ENCODE measurements at regions of chr4 and their contacts with region 1.

Region 1: DNA sequence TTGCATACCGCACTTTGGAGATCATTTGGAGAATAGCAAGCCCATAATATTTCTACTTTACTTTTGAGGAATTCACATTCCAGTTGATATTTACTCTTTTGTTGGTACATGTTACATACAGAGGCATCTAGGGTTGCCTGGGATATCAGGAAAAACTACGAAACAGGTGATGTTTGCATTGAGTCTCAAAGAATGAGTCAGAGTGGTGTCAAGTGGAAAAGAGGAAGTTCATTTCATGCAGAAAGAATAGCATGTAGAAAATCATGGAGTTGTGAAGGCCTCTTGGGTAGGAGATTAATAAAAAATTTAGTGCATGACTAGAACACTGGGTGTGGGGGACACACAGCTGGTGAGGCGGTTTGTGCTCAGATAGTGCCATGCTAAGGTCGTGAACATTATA is 33.5 kb upstream of the ELOVL6 start:
- DNase-seq: no peak
- ATAC-seq: peak; percentile 61
- H3K4me3 ChIP-seq: no peak overlapping the region
- H3K27ac ChIP-seq: no peak overlapping the region
- H3K4me1 ChIP-seq: no peaks in the 10 kb centered on the region
- H3K27me3 ChIP-seq: no peaks in the 10 kb centered on the region
- CTCF ChIP-seq: no peak

Region 2: GRCh38 chr4:109908731-109909130 is 323.1 kb before region 1 on chr4:
- intact Hi-C with region 1: loop called in 1 of 2 experiments (anchors 10 kb)
- DNase-seq: peak in 2 of 4 donors; percentile 16 to 25
- ATAC-seq: no peak
- H3K4me3 ChIP-seq: no peak overlapping the region
- H3K27ac ChIP-seq: no peak overlapping the region
- H3K4me1 ChIP-seq: no peaks in the 10 kb centered on the region
- H3K27me3 ChIP-seq: no peaks in the 10 kb centered on the region
- CTCF ChIP-seq: no peak

Region 3: DNA sequence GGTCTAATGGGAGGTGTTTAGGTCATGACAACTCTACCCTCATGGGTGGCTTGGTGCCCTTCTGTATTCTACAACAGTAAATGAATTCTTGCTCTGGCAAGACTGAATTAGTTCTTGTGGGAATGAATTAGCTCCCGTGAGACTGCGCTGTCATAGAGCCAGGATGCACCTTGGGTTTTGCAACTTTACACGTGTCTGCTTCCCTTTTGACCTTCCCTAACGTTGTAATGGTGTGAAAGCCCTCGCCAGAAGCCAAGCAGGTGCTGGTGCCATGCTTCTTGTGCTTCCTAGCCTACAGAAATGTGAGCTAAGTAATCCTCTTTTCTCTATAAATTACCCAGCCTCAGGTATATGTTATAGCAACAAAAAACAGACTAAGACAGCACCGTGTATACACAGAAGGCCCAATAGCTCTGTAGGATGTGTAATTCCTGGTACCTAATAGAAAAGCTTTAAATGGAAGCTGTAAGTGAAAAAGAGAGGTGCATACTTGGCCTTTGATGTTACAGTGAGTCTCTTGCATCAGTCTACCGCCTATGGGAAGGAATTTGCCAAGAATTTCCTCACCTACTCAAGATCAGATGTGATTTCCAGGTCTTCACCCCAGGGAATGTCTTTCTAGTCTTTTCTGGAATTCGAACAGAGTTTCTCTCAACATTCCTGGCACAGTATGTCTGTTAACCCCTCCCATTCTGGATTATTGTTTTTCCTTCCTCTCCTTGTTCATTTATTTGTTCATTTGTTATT is 240.9 kb after region 1 on chr4:
- intact Hi-C with region 1: no loop called
- DNase-seq: no peak
- ATAC-seq: no peak
- H3K4me3 ChIP-seq: no peak overlapping the region
- H3K27ac ChIP-seq: no peak overlapping the region
- H3K4me1 ChIP-seq: no peaks in the 10 kb centered on the region
- H3K27me3 ChIP-seq: peaks cover 0 to 6% of the 10 kb centered on the region in 2 donors
- CTCF ChIP-seq: no peak

Measured in left lung (tissue), 14 donors.